ENCODE measurements at regions of chr11 and their contacts with region 1.

Region 1: DNA sequence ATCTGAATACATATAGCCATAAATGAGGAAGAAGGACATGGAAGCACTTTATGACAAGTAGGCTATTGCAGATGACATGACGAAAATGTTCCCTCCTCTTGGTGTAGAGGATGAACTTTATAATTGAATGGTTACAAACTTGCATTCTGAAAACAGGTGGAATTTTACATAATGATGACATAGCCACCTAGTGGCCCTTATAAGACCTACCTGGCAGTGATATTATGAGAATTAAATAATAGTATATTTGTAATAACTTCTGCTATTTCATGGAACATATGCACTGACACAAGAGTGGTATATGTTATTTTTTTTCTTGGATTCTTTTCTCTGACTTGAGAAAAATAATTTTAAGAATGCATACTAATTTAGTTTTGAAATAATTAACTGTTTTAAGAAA is 22.9 kb downstream of the TRIM22 start:
- DNase-seq: peak in 3 of 4 experiments; percentile 14 to 20 (median 17)
- ATAC-seq: peak; percentile 42; the same call in 1 of the 3 replicates
- H3K4me3 ChIP-seq: no peak overlapping the region
- H3K27ac ChIP-seq: no peak overlapping the region
- H3K4me1 ChIP-seq: no peaks in the 10 kb centered on the region
- H3K27me3 ChIP-seq: peaks cover 3 to 8% of the 10 kb centered on the region in 2 experiments; a peak in 3 of 5 replicates
- CTCF ChIP-seq: peak in 2 of 3 experiments; percentile 18 to 53; a peak in 3 of 6 replicates
- EP300 ChIP-seq: no peak
- POLR2A ChIP-seq: no peak
- RAD21 ChIP-seq: peak in 1 of 2 experiments; percentile 61; a peak in 2 of 4 replicates

Region 2: DNA sequence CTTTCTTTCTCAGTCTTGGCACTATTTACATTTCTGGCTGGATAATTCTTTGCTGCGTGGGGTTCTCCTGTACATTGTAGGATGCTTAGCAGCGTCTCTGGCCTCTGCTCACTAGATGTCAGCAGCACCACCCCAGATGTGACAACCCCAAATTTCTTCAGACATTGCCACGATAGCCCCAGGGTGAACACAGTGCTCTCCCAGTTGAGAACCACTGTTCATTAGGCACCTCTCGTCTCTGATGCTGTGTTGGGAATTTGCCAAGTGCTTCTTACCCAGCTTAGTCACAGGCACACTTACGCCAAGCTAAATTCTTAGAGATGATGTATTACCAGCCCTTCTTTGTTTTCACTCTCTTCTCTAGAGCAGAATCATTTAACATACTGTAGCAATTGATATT is 106.7 kb before region 1 on chr11:
- CTCF ChIA-PET with region 1: no interaction called
- POLR2A ChIA-PET with region 1: no interaction called
- in situ Hi-C with region 1: no loop called
- intact Hi-C with region 1: loop called (anchors 5 kb)
- DNase-seq: no peak
- ATAC-seq: no peak; the same call in 1 of the 3 replicates
- H3K4me3 ChIP-seq: no peak overlapping the region
- H3K27ac ChIP-seq: no peak overlapping the region
- H3K4me1 ChIP-seq: peaks cover 0 to under 1% of the 10 kb centered on the region in 2 experiments; a peak in 1 of 5 replicates
- H3K27me3 ChIP-seq: no peaks in the 10 kb centered on the region
- CTCF ChIP-seq: peak in 2 of 3 experiments; percentile 5 to 28; a peak in 2 of 6 replicates
- EP300 ChIP-seq: no peak
- POLR2A ChIP-seq: no peak
- RAD21 ChIP-seq: 0 out of 4 replicates have a peak, but pooled peaks of 1 of the 2 experiments have one; percentile 17

Region 3: GRCh38 chr11:5847711-5848110 is 135.2 kb after region 1 on chr11:
- CTCF ChIA-PET with region 1: no interaction called
- POLR2A ChIA-PET with region 1: no interaction called
- in situ Hi-C with region 1: no loop called
- intact Hi-C with region 1: no loop called
- DNase-seq: peak in 1 of 4 experiments; percentile 3
- ATAC-seq: no peak
- H3K4me3 ChIP-seq: no peak overlapping the region
- H3K27ac ChIP-seq: no peak overlapping the region
- H3K4me1 ChIP-seq: no peaks in the 10 kb centered on the region
- H3K27me3 ChIP-seq: no peaks in the 10 kb centered on the region
- CTCF ChIP-seq: no peak
- EP300 ChIP-seq: no peak
- POLR2A ChIP-seq: no peak
- RAD21 ChIP-seq: no peak